ENCODE measurements at regions of chr20 and their contacts with region 1.

Region 1: GRCh38 chr20:25065625-25066338 is 7.8 kb upstream of the ACSS1 start:
- DNase-seq: peak; percentile 71
- ATAC-seq: peak; percentile 73

Region 2: DNA sequence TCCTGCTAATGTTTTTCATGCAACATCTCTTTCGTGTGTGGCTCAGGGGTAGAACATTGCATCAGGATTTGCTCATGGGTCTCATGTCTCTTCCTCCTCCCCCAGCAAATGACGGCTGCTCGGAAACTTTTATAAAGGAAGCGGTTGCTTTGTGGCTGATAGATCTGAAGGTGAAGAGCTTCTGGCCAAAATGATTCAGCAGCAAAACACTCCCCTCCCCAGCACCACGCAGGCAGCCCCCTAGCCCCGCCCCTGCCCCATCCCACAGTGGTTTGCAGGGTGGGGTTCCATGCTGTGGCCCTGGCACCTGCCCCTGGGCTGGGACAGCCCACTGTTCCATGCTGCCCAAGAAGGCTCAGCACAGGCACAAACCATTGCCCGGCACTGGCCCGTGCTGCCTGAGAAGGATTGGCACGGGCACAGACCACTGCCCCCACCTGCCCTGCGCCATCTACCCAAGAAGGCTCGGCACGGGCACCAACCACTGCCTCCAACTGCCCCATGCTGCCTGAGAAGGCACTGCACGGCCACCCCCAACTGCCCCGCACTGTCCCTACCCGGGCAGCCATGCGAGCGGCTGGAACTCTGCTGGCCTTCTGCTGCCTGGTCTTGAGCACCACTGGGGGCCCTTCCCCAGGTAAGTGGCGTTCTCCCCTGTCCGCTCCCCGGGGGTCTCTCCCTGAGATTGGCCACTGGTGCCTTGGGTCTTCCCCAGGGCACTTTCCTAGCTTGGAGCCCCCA is 116.7 kb before region 1 on chr20 and contains the start of gene CST7:
- intact Hi-C with region 1: no loop called
- DNase-seq: no peak
- ATAC-seq: peak; percentile 53
- total RNA-seq, gene CST7: 1.4 TPM

Region 3: GRCh38 chr20:25100914-25101313 is 35.1 kb after region 1 on chr20:
- intact Hi-C with region 1: no loop called
- DNase-seq: no peak
- ATAC-seq: peak; percentile 76

Region 4: GRCh38 chr20:25178563-25179438 is 113.0 kb after region 1 on chr20:
- intact Hi-C with region 1: loop called (anchors 5 kb)
- DNase-seq: no peak
- ATAC-seq: peak; percentile 91

Region 5: GRCh38 chr20:25356271-25356933 is 290.6 kb after region 1 on chr20:
- intact Hi-C with region 1: no loop called
- DNase-seq: peak; percentile 50
- ATAC-seq: peak; percentile 24